ENCODE measurements at regions of chr15 and their contacts with region 1.

Region 1: DNA sequence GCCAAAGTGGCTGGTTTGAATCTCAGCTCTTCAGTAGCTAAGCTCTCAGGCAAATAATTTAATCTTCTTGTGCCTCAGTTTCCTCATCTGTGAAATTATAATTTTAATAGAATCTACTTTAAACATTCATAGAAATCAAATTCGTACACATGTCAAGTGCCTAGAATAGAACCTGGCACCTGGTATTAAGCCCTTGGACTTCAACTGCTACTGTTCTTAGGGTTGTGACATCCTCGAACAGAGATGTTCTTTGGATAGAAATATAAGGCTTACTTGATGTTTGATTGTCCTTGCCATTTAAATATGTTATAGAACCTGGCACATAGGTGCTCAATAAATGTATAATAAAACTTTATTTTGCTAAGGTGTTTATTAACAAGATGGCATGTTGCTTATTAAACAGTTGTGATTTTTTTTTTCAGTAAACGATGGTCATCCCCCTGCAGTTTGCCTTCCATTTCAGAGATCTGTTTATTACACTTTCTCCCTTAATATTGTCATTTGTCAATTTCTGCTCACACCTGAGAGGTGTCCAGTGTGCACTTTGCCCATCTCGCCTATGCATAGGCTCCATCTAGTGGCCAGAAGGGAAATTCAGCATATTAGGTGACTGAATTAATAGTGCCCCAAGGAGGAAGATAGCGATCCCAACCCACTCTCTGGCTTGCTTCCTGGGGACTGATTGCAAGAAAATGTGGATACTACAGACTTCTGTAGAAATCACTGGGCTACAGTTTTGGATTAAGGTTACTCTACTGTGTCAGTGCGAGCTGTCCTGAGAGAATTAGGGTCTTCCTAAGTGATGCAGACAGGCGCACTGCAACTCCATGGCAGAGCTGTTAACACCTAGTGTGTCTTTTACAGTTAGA is 10.7 kb downstream of the IGF1R start:
- DNase-seq: peak in 7 of 9 donors; percentile 24 to 56 (median 49)
- ATAC-seq: peak; percentile 85
- H3K4me3 ChIP-seq: no peak overlapping the region
- H3K4me3 Mint-ChIP-seq: no peak overlapping the region
- H3K27ac ChIP-seq: no peak overlapping the region
- H3K27ac Mint-ChIP-seq: peak overlapping the region in 2 of 9 donors; percentile 43 to 73
- H3K4me1 ChIP-seq: peaks cover 0 to 23% of the 10 kb centered on the region in 2 donors
- H3K4me1 Mint-ChIP-seq: peaks cover 15 to 79% (median 71%) of the 10 kb centered on the region in 7 donors
- H3K27me3 ChIP-seq: no peaks in the 10 kb centered on the region
- H3K27me3 Mint-ChIP-seq: peaks cover 0 to 6% (median 0%) of the 10 kb centered on the region in 5 donors

Region 2: GRCh38 chr15:98581715-98582114 is 77.3 kb before region 1 on chr15:
- CTCF ChIA-PET with region 1: interaction called, 26 read pairs
- POLR2A ChIA-PET with region 1: interaction called, 9 read pairs
- intact Hi-C with region 1: loop called (anchors 1 to 2 kb)
- DNase-seq: peak in 6 of 9 donors; percentile 18 to 54 (median 40)
- ATAC-seq: peak; percentile 60
- H3K4me3 ChIP-seq: no peak overlapping the region
- H3K4me3 Mint-ChIP-seq: no peak overlapping the region
- H3K27ac ChIP-seq: no peak overlapping the region
- H3K27ac Mint-ChIP-seq: no peak overlapping the region
- H3K4me1 ChIP-seq: peaks cover 0 to 11% of the 10 kb centered on the region in 2 donors
- H3K4me1 Mint-ChIP-seq: peaks cover 4 to 18% (median 13%) of the 10 kb centered on the region in 7 donors
- H3K27me3 ChIP-seq: peaks cover 0 to 3% of the 10 kb centered on the region in 2 donors
- H3K27me3 Mint-ChIP-seq: peaks cover 22 to 58% (median 34%) of the 10 kb centered on the region in 5 donors

Region 3: DNA sequence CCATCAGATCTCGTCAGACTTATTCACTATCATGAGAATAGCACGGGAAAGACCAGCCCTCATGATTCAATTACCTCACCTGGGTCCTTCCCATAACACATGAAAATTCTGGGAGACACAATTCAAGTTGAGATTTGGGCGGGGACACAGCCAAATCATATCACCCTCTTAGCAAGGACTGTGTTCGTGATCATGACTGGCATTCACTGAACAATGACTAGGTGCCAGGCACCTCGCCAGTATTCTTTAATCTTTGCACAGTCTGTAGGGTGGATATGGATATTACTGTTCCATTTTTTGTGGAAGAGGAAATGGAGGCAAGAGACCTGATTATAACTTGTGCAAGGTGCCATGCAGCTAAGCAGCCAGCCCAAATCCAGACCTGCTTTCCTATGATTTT is 66.8 kb after region 1 on chr15:
- CTCF ChIA-PET with region 1: no interaction called
- POLR2A ChIA-PET with region 1: no interaction called
- intact Hi-C with region 1: no loop called
- DNase-seq: no peak
- ATAC-seq: no peak
- H3K4me3 ChIP-seq: no peak overlapping the region
- H3K4me3 Mint-ChIP-seq: peak overlapping the region in 2 of 10 donors; percentile 4 to 24
- H3K27ac ChIP-seq: no peak overlapping the region
- H3K27ac Mint-ChIP-seq: no peak overlapping the region
- H3K4me1 ChIP-seq: peaks cover 0 to 19% of the 10 kb centered on the region in 2 donors
- H3K4me1 Mint-ChIP-seq: peaks cover 23 to 94% (median 87%) of the 10 kb centered on the region in 7 donors
- H3K27me3 ChIP-seq: no peaks in the 10 kb centered on the region
- H3K27me3 Mint-ChIP-seq: no peaks in the 10 kb centered on the region

Region 4: DNA sequence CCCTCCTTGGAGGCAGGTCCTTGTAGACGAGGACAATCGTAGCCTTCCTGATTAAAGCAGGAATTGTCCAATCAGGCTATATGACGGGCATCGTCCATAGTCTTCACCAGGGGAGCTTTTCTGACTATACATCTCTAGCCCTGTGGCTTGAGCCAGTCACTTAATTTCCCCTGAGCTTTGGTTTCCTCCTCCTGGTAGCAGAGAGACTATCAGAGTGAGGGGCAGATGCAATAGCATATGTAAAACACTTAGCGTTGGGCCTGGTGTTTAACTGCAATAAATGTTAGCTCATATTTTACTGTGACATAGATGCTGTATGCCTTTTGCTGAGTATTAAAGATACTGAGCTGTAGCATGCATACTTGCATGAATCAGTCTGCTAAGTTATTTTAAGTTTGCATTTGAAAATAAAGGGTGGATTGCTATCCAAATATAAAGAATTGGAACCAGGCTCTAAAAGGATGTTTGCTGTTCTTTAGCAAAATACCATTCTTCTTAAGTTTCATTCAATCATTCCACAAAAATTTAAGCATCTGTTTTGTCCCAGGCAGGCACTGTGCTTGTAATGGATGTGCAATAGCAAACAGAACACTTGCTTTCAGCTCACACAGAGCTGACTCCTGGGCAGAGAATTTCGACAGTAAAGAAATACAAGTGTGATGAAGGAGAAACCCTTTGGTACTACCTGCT is 197.3 kb after region 1 on chr15:
- CTCF ChIA-PET with region 1: no interaction called
- POLR2A ChIA-PET with region 1: no interaction called
- intact Hi-C with region 1: no loop called
- DNase-seq: no peak
- ATAC-seq: no peak
- H3K4me3 ChIP-seq: no peak overlapping the region
- H3K4me3 Mint-ChIP-seq: no peak overlapping the region
- H3K27ac ChIP-seq: no peak overlapping the region
- H3K27ac Mint-ChIP-seq: peak overlapping the region in 3 of 9 donors; percentile 28 to 72 (median 34)
- H3K4me1 ChIP-seq: peaks cover 14 to 31% of the 10 kb centered on the region in 2 donors
- H3K4me1 Mint-ChIP-seq: peaks cover 45 to 93% (median 87%) of the 10 kb centered on the region in 7 donors
- H3K27me3 ChIP-seq: no peaks in the 10 kb centered on the region
- H3K27me3 Mint-ChIP-seq: no peaks in the 10 kb centered on the region

Region 5: GRCh38 chr15:99076552-99077308 is 417.7 kb after region 1 on chr15:
- CTCF ChIA-PET with region 1: interaction called, 3 read pairs
- POLR2A ChIA-PET with region 1: no interaction called
- intact Hi-C with region 1: loop called in 1 of 2 experiments (anchors 5 kb)
- DNase-seq: peak in 8 of 9 donors; percentile 20 to 65 (median 56)
- ATAC-seq: peak; percentile 89
- H3K4me3 ChIP-seq: peak overlapping the region; percentile 25
- H3K4me3 Mint-ChIP-seq: peak overlapping the region; percentile 73 to 92 (median 83)
- H3K27ac ChIP-seq: no peak overlapping the region
- H3K27ac Mint-ChIP-seq: peak overlapping the region in 4 of 9 donors; percentile 1 to 74 (median 57)
- H3K4me1 ChIP-seq: no peaks in the 10 kb centered on the region
- H3K4me1 Mint-ChIP-seq: peaks cover 0 to 8% (median 4%) of the 10 kb centered on the region in 7 donors
- H3K27me3 ChIP-seq: no peaks in the 10 kb centered on the region
- H3K27me3 Mint-ChIP-seq: peaks cover 7 to 26% (median 23%) of the 10 kb centered on the region in 5 donors